Left ventricle myocardium inferior (tissue), 1 donor: ENCODE measurements at regions of chr10 and their contacts with region 1.

Region 1: GRCh38 chr10:22003079-22003913 is at the start of gene DNAJC1:
- DNase-seq: peak; percentile 99
- H3K4me3 ChIP-seq: peak within 1 kb of the TSS; percentile 90
- H3K27ac ChIP-seq: peak within 1 kb of the TSS; percentile 97
- H3K4me1 ChIP-seq: peaks cover 34% of the 10 kb centered on the region
- H3K27me3 ChIP-seq: no peaks in the 10 kb centered on the region
- CTCF ChIP-seq: peak; percentile 34
- total RNA-seq, gene DNAJC1: 12.0 TPM

Region 2: DNA sequence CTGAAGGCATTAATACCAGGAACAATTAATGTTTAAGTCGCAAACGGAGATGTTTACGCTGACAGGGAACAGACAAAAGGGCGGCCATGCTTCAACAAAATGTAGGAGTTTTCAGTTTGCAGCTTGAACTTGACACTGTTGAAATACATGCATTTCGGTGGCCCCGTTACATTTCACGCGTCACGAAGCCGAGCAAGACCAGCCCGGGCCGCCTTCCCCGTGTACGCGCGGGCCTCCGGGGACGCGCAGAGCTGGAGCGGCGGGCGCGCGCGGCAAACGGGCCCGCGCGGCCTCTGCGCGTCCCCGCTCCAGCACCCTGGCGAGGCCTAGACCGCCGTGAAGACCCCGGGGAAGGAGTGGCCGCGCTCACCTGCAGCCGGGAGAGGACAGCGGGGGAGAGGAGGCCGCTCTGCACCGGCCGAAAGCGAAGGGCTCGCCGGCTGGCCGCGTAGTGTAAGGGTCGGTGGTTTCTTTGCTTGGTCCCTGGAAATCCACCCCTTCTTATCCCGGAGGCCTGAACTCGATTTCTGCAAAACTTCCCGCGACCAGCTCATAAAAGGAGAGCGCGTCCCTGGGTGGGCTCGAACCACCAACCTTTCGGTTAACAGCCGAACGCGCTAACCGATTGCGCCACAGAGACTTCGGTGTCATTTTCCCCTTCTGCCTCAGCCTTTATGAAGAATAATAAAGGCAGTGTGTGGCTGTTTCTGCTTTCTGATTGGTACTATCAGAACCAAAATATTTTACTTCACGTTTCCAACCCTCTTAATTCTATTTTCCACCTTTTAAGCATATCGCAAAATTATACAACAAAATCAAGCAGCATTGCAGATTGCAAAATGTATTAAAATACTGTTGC is 225.9 kb after region 1 on chr10:
- intact Hi-C with region 1: loop called (anchors 10 kb)
- DNase-seq: peak; percentile 85
- H3K4me3 ChIP-seq: peak overlapping the region; percentile 82
- H3K27ac ChIP-seq: peak overlapping the region; percentile 97
- H3K4me1 ChIP-seq: peaks cover 13% of the 10 kb centered on the region
- H3K27me3 ChIP-seq: no peaks in the 10 kb centered on the region
- CTCF ChIP-seq: peak; percentile 8

Region 3: DNA sequence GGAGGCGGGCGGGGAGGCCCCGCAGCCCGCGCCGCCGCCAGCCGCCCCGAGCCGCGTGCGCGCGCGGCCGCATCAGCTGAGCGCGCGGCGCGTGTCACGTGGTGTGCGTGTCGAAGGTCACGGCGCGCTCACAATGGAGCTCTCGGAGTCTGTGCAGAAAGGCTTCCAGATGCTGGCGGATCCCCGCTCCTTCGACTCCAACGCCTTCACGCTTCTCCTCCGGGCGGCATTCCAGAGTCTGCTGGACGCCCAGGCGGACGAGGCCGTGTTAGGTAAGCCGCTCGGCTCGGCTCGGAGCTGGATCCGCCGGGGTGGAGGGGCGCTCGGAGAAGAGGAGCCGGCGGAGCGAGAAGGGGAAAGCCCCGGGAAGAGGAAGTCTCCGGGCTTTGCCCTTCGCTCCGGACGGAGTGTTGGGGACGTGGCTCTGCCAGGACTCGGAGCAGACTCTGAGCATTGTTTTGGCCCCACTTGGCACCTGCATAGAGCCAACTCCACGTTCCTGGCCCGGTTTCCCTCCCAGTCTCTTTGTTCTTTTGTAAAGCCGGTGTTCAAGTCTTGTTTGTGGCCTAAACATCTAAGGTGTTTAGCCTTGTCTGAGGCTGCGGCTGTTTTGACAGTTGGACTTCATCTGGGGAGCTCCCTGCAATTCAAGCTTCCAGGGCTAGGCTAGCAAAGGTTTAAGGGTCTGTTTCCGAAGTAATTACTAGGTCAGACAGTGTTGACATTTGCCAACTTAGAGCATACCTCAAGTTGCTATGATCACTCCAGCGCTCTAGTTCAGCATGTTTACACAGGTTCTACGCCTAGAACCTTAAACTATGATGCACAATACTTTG is 313.2 kb after region 1 on chr10 and contains the start of gene COMMD3:
- intact Hi-C with region 1: loop called (anchors 10 kb)
- DNase-seq: peak; percentile 90
- H3K4me3 ChIP-seq: peak within 1 kb of the TSS; percentile 85
- H3K27ac ChIP-seq: peak within 1 kb of the TSS; percentile 97
- H3K4me1 ChIP-seq: peaks cover 55% of the 10 kb centered on the region
- H3K27me3 ChIP-seq: no peaks in the 10 kb centered on the region
- CTCF ChIP-seq: no peak
- total RNA-seq, gene COMMD3: 89.7 TPM